ENCODE measurements at regions of chr19 and their contacts with region 1.

Region 1: DNA sequence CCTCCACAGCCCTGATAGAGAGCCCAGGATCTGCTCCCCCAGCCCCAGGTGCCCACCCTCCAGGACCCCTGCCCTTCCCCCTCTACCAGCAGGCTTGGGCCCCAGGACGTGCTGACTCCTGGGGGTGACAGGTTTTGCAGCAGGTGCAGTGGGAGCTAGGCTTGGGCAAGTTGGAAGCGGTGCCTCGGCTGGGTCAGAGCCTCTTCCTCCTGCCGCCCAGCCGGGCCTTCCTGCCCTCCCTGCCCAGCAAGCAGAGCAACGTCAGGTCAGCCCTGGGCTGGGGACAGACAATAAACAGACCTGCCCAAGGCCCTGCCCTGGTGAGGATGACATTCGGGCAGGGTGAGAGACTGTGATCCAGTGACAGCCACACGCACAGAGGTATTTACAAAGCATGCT is 9.2 kb upstream of the NCCRP1 start:
- DNase-seq: no peak
- H3K4me3 ChIP-seq: no peak overlapping the region
- H3K27ac ChIP-seq: no peak overlapping the region
- H3K4me1 ChIP-seq: no peaks in the 10 kb centered on the region
- H3K27me3 ChIP-seq: no peaks in the 10 kb centered on the region
- CTCF ChIP-seq: 0 out of 2 replicates have a peak, but pooled peaks have one; percentile 22

Region 2: GRCh38 chr19:39124136-39124764 is 63.3 kb before region 1 on chr19:
- CTCF ChIA-PET with region 1: no interaction called
- POLR2A ChIA-PET with region 1: no interaction called
- intact Hi-C with region 1: loop called (anchors 5 kb)
- DNase-seq: no peak
- H3K4me3 ChIP-seq: no peak overlapping the region
- H3K27ac ChIP-seq: no peak overlapping the region
- H3K4me1 ChIP-seq: no peaks in the 10 kb centered on the region
- H3K27me3 ChIP-seq: no peaks in the 10 kb centered on the region
- CTCF ChIP-seq: no peak

Region 3: DNA sequence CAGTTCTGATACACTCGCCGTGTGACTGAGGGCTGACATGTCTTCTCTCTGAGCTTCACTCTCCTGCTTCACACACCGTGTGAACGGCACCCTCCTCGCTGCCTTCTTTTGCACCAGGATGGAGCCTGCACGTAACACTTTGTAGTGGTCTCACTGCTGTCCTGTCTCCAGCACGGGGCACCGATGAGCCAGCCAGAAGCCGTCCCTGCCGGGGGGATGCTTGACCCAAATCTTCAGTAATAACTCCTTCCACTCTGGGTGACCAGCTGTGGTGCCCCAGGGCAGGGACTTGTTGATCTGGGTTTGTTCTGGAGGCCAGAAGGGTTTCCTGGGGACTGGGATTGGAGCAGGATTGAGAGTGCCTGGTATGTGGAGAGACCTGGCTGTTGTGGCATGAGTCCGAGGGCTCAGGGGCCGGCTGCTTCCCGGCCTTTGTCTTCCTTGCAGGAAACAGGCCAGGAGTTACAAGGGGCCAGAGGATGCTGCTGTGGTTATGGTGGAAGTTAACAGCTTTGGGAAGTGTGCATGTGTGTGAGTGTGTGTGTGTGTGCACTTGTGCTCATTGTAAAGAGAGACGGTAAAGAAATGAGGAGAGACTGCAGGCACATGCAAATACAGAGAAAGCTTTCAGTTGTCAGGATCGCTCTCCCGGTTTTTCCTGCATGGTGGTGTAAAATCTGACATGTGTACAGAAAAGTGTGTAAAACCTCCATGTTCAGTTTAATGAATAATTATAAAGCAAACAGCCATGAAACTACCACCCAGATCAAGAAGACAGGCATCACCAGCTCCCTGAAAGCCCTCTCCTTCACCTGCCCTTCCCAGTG is 43.1 kb before region 1 on chr19:
- CTCF ChIA-PET with region 1: no interaction called
- POLR2A ChIA-PET with region 1: no interaction called
- intact Hi-C with region 1: no loop called
- DNase-seq: no peak
- H3K4me3 ChIP-seq: no peak overlapping the region
- H3K27ac ChIP-seq: no peak overlapping the region
- H3K4me1 ChIP-seq: no peaks in the 10 kb centered on the region
- H3K27me3 ChIP-seq: no peaks in the 10 kb centered on the region
- CTCF ChIP-seq: no peak